Uterus (tissue), 4 donors: ENCODE measurements at regions of chr13 and their contacts with region 1.

Region 1: GRCh38 chr13:73849292-73849691 is 284.9 kb downstream of the KLF12 start:
- DNase-seq: no peak
- H3K4me3 ChIP-seq: no peak overlapping the region
- H3K27ac ChIP-seq: no peak overlapping the region
- H3K4me1 ChIP-seq: no peaks in the 10 kb centered on the region
- H3K27me3 ChIP-seq: no peaks in the 10 kb centered on the region
- CTCF ChIP-seq: no peak
- POLR2A ChIP-seq: no peak

Region 2: GRCh38 chr13:73902296-73902695 is 53.0 kb after region 1 on chr13:
- intact Hi-C with region 1: loop called (anchors 10 kb)
- DNase-seq: no peak
- H3K4me3 ChIP-seq: no peak overlapping the region
- H3K27ac ChIP-seq: no peak overlapping the region
- H3K4me1 ChIP-seq: no peaks in the 10 kb centered on the region
- H3K27me3 ChIP-seq: no peaks in the 10 kb centered on the region
- CTCF ChIP-seq: no peak
- POLR2A ChIP-seq: no peak

Region 3: GRCh38 chr13:74114202-74114601 is 264.9 kb after region 1 on chr13:
- intact Hi-C with region 1: no loop called
- DNase-seq: no peak
- H3K4me3 ChIP-seq: no peak overlapping the region
- H3K27ac ChIP-seq: no peak overlapping the region
- H3K4me1 ChIP-seq: no peaks in the 10 kb centered on the region
- H3K27me3 ChIP-seq: no peaks in the 10 kb centered on the region
- CTCF ChIP-seq: no peak
- POLR2A ChIP-seq: no peak

Region 4: GRCh38 chr13:74158028-74158427 is 308.7 kb after region 1 on chr13:
- intact Hi-C with region 1: no loop called
- DNase-seq: peak in 1 of 2 donors; percentile 17
- H3K4me3 ChIP-seq: no peak overlapping the region
- H3K27ac ChIP-seq: no peak overlapping the region
- H3K4me1 ChIP-seq: no peaks in the 10 kb centered on the region
- H3K27me3 ChIP-seq: no peaks in the 10 kb centered on the region
- CTCF ChIP-seq: no peak
- POLR2A ChIP-seq: no peak